AG04450 (cell line): ENCODE measurements at regions of chr12 and their contacts with region 1.

Region 1: GRCh38 chr12:12890815-12891645 is at the start of gene GPRC5A:
- DNase-seq: peak; percentile 82
- H3K4me3 ChIP-seq: peak within 1 kb of the TSS; percentile 61
- H3K27ac ChIP-seq: peak within 1 kb of the TSS; percentile 97
- H3K27me3 ChIP-seq: no peaks in the 10 kb centered on the region
- CTCF ChIP-seq: peak; percentile 37
- polyA plus RNA-seq, gene GPRC5A: 117 and 118 TPM in 2 replicates

Region 2: GRCh38 chr12:12779529-12779928 is 111.5 kb before region 1 on chr12:
- CTCF ChIA-PET with region 1: no interaction called
- POLR2A ChIA-PET with region 1: no interaction called
- DNase-seq: peak; percentile 88
- H3K4me3 ChIP-seq: no peak overlapping the region
- H3K27ac ChIP-seq: no peak overlapping the region
- H3K27me3 ChIP-seq: no peaks in the 10 kb centered on the region
- CTCF ChIP-seq: no peak

Region 3: GRCh38 chr12:12837025-12837872 is 53.8 kb before region 1 on chr12:
- CTCF ChIA-PET with region 1: interaction called, 18 read pairs
- POLR2A ChIA-PET with region 1: interaction called, 5 read pairs
- DNase-seq: peak; percentile 44
- H3K4me3 ChIP-seq: no peak overlapping the region
- H3K27ac ChIP-seq: peak overlapping the region; percentile 47
- H3K27me3 ChIP-seq: no peaks in the 10 kb centered on the region
- CTCF ChIP-seq: peak; percentile 66

Region 4: DNA sequence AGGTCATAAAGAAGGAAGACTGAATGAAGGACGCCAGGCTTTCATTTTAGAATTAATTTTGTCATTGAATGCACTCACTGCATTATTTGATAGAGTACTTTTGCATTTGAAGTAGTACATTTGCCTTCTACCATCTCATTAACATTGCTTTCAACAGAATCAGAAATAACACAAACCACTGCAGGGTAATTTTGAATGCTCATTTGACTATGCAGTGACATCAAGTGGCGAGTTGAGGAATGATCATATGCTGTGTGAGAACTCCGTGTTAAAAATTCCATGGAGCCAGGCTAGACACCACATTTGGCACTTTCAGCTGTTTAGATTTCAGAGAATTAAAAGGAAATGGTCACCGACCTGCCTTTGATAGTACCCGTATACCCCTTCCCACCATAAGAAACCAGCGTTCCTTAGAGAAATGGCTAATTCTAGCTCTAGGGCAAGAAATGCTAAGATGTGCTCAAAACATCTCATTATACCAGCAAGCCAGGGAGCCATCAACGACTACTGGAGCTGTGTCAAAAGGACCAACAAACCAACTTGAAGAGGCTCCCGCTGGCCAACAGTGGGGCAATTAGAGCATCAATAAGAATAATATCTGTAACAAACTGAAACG is 92.5 kb after region 1 on chr12:
- CTCF ChIA-PET with region 1: no interaction called
- POLR2A ChIA-PET with region 1: no interaction called
- DNase-seq: no peak
- H3K4me3 ChIP-seq: no peak overlapping the region
- H3K27ac ChIP-seq: no peak overlapping the region
- H3K27me3 ChIP-seq: no peaks in the 10 kb centered on the region
- CTCF ChIP-seq: peak; percentile 69